CD14-positive monocyte (primary cell): ENCODE measurements at regions of chr3 and their contacts with region 1.

Region 1: DNA sequence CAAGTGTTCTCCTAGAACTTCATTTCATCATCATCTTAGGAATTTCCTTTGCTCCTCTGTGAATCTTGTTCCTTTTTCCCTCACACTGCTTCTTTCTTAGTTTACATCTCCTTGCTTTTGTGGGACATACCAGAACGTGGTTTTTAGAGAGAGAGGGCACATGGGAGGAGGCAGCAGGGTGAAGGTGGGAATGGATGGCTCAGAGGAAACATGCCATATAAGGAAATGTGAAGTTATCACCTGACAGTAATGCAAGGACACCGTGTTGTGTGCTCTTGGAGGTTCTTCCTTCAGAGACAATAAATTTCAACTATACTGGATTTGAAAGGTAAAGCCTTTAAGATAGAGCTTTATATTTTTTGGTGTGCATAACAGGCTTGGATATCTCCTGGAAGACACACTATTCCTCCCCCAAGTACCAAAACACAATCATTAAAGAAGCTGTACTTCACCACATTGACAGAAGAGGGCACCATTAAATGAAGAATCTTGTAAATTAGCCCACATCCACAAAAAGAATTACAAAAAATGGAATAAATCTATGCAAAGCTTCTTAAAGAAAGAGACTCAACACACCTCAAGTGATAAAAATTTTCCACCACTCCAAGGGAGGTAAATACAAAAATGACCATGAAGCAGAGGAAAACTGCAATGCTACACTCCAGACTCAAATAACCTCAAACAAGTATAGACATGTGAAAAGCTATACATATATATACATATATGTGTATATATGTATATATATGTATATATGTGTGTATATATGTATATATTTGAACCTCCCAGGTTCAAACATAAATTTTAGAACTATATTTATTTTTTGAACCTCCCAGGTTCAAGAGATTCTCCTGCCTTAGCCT is 26.1 kb downstream of the RPL39L start:
- DNase-seq: peak in 2 of 3 donors; percentile 21 to 29
- H3K4me3 ChIP-seq: no peak overlapping the region
- H3K4me3 Mint-ChIP-seq: no peak overlapping the region
- H3K27ac ChIP-seq: no peak overlapping the region
- H3K27ac Mint-ChIP-seq: peak overlapping the region in 1 of 7 donors; percentile 64
- H3K4me1 ChIP-seq: no peaks in the 10 kb centered on the region
- H3K4me1 Mint-ChIP-seq: peaks cover 2% of the 10 kb centered on the region
- H3K27me3 ChIP-seq: no peaks in the 10 kb centered on the region
- H3K27me3 Mint-ChIP-seq: peaks cover 0 to 2% (median 1%) of the 10 kb centered on the region in 3 donors
- CTCF ChIP-seq: peak; percentile 89

Region 2: GRCh38 chr3:186882881-186883685 is 230.1 kb before region 1 on chr3:
- intact Hi-C with region 1: no loop called
- DNase-seq: peak; percentile 6 to 64 (median 6)
- H3K4me3 ChIP-seq: no peak overlapping the region
- H3K4me3 Mint-ChIP-seq: no peak overlapping the region
- H3K27ac ChIP-seq: no peak overlapping the region
- H3K27ac Mint-ChIP-seq: no peak overlapping the region
- H3K4me1 ChIP-seq: peaks cover 4 to 11% of the 10 kb centered on the region in 2 donors
- H3K4me1 Mint-ChIP-seq: peaks cover 14% of the 10 kb centered on the region
- H3K27me3 ChIP-seq: no peaks in the 10 kb centered on the region
- H3K27me3 Mint-ChIP-seq: peaks cover 0 to 4% (median 1%) of the 10 kb centered on the region in 3 donors
- CTCF ChIP-seq: no peak

Region 3: DNA sequence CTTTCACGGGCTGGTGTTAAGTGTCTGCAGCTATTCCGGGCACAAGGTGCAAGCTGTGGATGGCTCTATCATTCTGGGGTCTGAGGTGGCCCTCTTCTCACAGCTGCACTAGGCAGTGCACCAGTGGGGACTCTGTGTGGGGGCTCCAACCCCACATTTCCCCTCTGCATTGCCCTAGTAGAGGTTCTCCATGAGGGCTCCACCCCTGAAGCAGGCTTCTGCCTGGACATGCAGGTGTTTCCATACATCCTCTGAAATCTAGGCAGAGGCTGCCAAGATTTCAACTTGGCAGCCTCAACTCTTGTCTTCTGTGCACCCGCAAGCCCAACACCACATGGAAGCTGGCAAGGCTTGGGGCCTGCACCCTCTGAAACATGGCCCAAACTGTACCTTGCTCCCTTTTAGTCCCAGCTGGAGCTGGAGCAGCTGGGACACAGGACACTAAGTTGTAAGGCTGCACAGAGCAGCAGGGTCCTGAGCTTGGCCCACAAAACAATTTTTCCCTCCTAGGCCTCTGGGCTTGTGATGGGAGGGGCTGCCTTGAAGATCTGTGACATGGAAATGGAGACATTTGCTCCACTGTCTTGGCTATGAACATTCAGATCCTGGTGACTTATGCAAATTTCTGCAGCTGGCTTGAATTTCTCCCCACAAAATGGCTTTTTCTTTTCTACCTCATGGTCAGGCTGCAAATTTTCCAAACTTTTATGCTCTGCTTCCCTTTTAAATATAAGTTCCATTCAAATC is 32.2 kb after region 1 on chr3:
- intact Hi-C with region 1: loop called in 1 of 2 experiments (anchors 5 kb)
- DNase-seq: no peak
- H3K4me3 ChIP-seq: no peak overlapping the region
- H3K4me3 Mint-ChIP-seq: no peak overlapping the region
- H3K27ac ChIP-seq: no peak overlapping the region
- H3K27ac Mint-ChIP-seq: no peak overlapping the region
- H3K4me1 ChIP-seq: no peaks in the 10 kb centered on the region
- H3K4me1 Mint-ChIP-seq: no peaks in the 10 kb centered on the region
- H3K27me3 ChIP-seq: no peaks in the 10 kb centered on the region
- H3K27me3 Mint-ChIP-seq: peaks cover 1 to 14% (median 2%) of the 10 kb centered on the region in 3 donors
- CTCF ChIP-seq: no peak

Region 4: GRCh38 chr3:187164885-187165543 is 51.9 kb after region 1 on chr3:
- intact Hi-C with region 1: loop called (anchors 1 to 5 kb)
- DNase-seq: peak; percentile 25 to 62 (median 49)
- H3K4me3 ChIP-seq: no peak overlapping the region
- H3K4me3 Mint-ChIP-seq: no peak overlapping the region
- H3K27ac ChIP-seq: no peak overlapping the region
- H3K27ac Mint-ChIP-seq: no peak overlapping the region
- H3K4me1 ChIP-seq: no peaks in the 10 kb centered on the region
- H3K4me1 Mint-ChIP-seq: peaks cover under 1% of the 10 kb centered on the region
- H3K27me3 ChIP-seq: no peaks in the 10 kb centered on the region
- H3K27me3 Mint-ChIP-seq: peaks cover 0 to 6% (median 6%) of the 10 kb centered on the region in 3 donors
- CTCF ChIP-seq: peak; percentile 82